MCF 10A (cell line): ENCODE measurements at regions of chr6 and their contacts with region 1.

Region 1: GRCh38 chr6:24855395-24856245 is 56.9 kb upstream of the ARMH2 start:
- DNase-seq: peak; percentile 76
- H3K4me3 Mint-ChIP-seq: no peak overlapping the region
- H3K27ac Mint-ChIP-seq: peak overlapping the region; percentile 39
- H3K4me1 Mint-ChIP-seq: peaks cover 28% of the 10 kb centered on the region
- H3K27me3 Mint-ChIP-seq: no peaks in the 10 kb centered on the region
- CTCF ChIP-seq: peak; percentile 84

Region 2: DNA sequence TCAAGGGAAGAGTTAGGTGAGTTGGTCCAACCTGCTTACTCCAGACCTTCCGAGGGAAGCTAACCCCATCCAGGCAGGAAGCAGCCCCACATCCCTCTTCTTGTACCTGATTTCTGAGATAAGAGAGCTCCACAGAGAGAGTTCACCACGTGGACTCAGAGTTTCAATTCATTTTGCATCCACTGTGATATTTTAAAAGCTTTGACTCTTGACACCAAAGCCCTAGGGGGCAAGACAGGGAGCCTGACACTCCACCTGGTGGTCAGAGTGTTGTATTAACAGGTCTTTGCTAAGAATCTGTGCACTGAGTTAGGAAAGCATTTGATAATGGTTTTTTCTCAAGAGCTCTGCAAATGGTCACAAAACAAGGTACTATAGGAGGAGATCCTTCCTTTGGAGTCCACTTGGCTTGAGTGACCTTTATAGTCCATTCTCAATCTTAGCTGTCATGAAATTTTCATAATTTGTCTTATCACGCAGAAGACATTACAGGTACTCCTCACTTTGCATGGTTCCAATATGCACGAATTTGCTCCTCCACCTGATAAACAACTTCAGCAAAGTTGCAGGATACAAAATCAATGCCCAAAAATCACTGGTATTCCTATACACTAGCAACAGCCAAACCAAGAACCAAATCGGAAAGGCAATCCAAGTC is 136.3 kb after region 1 on chr6:
- CTCF ChIA-PET with region 1: interaction called, 30 read pairs
- POLR2A ChIA-PET with region 1: interaction called, 19 read pairs
- intact Hi-C with region 1: loop called (anchors 1 kb)
- DNase-seq: peak; percentile 76
- H3K4me3 Mint-ChIP-seq: no peak overlapping the region
- H3K27ac Mint-ChIP-seq: no peak overlapping the region
- H3K4me1 Mint-ChIP-seq: peaks cover 19% of the 10 kb centered on the region
- H3K27me3 Mint-ChIP-seq: no peaks in the 10 kb centered on the region
- CTCF ChIP-seq: peak; percentile 37

Region 3: GRCh38 chr6:25027221-25027916 is 171.7 kb after region 1 on chr6:
- CTCF ChIA-PET with region 1: interaction called, 10 read pairs
- POLR2A ChIA-PET with region 1: interaction called, 11 read pairs
- intact Hi-C with region 1: no loop called
- DNase-seq: no peak
- H3K4me3 Mint-ChIP-seq: no peak overlapping the region
- H3K27ac Mint-ChIP-seq: no peak overlapping the region
- H3K4me1 Mint-ChIP-seq: peaks cover 15% of the 10 kb centered on the region
- H3K27me3 Mint-ChIP-seq: no peaks in the 10 kb centered on the region
- CTCF ChIP-seq: no peak

Region 4: GRCh38 chr6:25070547-25071366 is 215.1 kb after region 1 on chr6:
- CTCF ChIA-PET with region 1: interaction called, 37 read pairs
- POLR2A ChIA-PET with region 1: interaction called, 5 read pairs
- intact Hi-C with region 1: loop called (anchors 1 kb)
- DNase-seq: peak; percentile 86
- H3K4me3 Mint-ChIP-seq: no peak overlapping the region
- H3K27ac Mint-ChIP-seq: no peak overlapping the region
- H3K4me1 Mint-ChIP-seq: no peaks in the 10 kb centered on the region
- H3K27me3 Mint-ChIP-seq: no peaks in the 10 kb centered on the region
- CTCF ChIP-seq: peak; percentile 91

Region 5: GRCh38 chr6:25601800-25602673 is 746.4 kb after region 1 on chr6:
- CTCF ChIA-PET with region 1: no interaction called
- POLR2A ChIA-PET with region 1: no interaction called
- intact Hi-C with region 1: loop called (anchors 5 kb)
- DNase-seq: peak; percentile 58
- H3K4me3 Mint-ChIP-seq: no peak overlapping the region
- H3K27ac Mint-ChIP-seq: no peak overlapping the region
- H3K4me1 Mint-ChIP-seq: no peaks in the 10 kb centered on the region
- H3K27me3 Mint-ChIP-seq: no peaks in the 10 kb centered on the region
- CTCF ChIP-seq: peak; percentile 47